GM12878 (cell line): ENCODE measurements at regions of chr12 and their contacts with region 1.

Region 1: DNA sequence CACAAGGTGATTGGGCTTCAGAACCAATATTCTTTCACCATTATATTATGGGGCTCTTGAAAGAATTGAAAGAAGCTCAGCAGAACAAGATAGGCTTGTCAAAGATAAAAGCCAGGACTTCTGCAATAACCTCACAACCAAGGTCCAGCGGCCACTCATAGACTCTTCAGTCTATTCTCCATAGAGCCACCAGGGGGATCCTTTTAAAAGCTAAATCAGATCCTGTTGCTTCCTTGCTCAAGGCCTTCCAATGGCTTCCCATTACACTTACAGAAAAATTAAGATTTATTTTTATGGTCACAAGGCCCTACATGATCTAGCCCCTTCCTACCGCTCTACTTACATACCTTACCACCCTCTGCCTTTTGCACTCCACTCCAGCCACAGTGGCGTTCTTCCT is 169.6 kb downstream of the C12orf42 start:
- DNase-seq: no peak
- ATAC-seq: peak; percentile 65
- H3K4me3 ChIP-seq: no peak overlapping the region
- H3K27ac ChIP-seq: no peak overlapping the region
- H3K4me1 ChIP-seq: no peaks in the 10 kb centered on the region
- H3K27me3 ChIP-seq: no peaks in the 10 kb centered on the region
- CTCF ChIP-seq: peak; percentile 26 to 42 (median 31); a peak in 4 of 6 replicates
- EP300 ChIP-seq: no peak
- POLR2A ChIP-seq: no peak
- RAD21 ChIP-seq: peak; percentile 70

Region 2: DNA sequence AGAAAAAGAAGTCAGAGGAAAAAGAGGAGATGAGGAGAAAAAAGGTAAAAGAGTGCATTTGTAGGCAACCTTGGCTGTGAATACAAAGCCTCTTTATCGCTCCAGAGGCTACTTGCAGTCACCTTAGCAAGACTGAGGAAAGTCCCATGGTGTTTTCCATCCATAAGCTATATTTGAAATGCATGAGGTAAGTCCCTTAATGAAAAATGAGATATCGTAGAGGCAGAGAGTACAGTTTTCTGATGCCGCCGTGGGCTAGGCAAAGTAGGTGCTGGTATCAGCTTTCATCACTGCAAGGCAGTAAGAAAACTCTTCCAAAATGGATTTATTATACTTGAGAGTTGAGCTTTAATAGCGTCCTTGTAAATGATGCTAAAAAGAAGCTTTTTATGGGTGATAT is 181.9 kb before region 1 on chr12:
- CTCF ChIA-PET with region 1: no interaction called
- POLR2A ChIA-PET with region 1: no interaction called
- RAD21 ChIA-PET with region 1: no interaction called
- SMC1A ChIA-PET with region 1: no interaction called
- in situ Hi-C with region 1: no loop called
- intact Hi-C with region 1: no loop called
- DNase-seq: peak; percentile 48
- ATAC-seq: peak; percentile 94
- H3K4me3 ChIP-seq: no peak overlapping the region
- H3K27ac ChIP-seq: peak overlapping the region; percentile 17; the same call in 1 of the 2 replicates
- H3K4me1 ChIP-seq: no peaks in the 10 kb centered on the region
- H3K27me3 ChIP-seq: no peaks in the 10 kb centered on the region
- CTCF ChIP-seq: no peak
- EP300 ChIP-seq: peak in 1 of 2 experiments; percentile 23; a peak in 1 of 4 replicates
- POLR2A ChIP-seq: no peak
- RAD21 ChIP-seq: no peak

Region 3: GRCh38 chr12:103175617-103176016 is 150.6 kb before region 1 on chr12:
- CTCF ChIA-PET with region 1: no interaction called
- POLR2A ChIA-PET with region 1: no interaction called
- RAD21 ChIA-PET with region 1: no interaction called
- SMC1A ChIA-PET with region 1: no interaction called
- in situ Hi-C with region 1: no loop called
- intact Hi-C with region 1: no loop called
- DNase-seq: no peak
- ATAC-seq: no peak
- H3K4me3 ChIP-seq: no peak overlapping the region
- H3K27ac ChIP-seq: no peak overlapping the region
- H3K4me1 ChIP-seq: no peaks in the 10 kb centered on the region
- H3K27me3 ChIP-seq: no peaks in the 10 kb centered on the region
- CTCF ChIP-seq: no peak
- EP300 ChIP-seq: no peak
- POLR2A ChIP-seq: no peak
- RAD21 ChIP-seq: no peak

Region 4: GRCh38 chr12:103336940-103337339 is 10.8 kb after region 1 on chr12:
- CTCF ChIA-PET with region 1: interaction called, 13 read pairs
- POLR2A ChIA-PET with region 1: no interaction called
- RAD21 ChIA-PET with region 1: interaction called, 3 read pairs
- SMC1A ChIA-PET with region 1: interaction called, 6 read pairs
- in situ Hi-C with region 1: no loop called
- intact Hi-C with region 1: no loop called
- DNase-seq: no peak
- ATAC-seq: no peak
- H3K4me3 ChIP-seq: no peak overlapping the region
- H3K27ac ChIP-seq: no peak overlapping the region
- H3K4me1 ChIP-seq: no peaks in the 10 kb centered on the region
- H3K27me3 ChIP-seq: no peaks in the 10 kb centered on the region
- CTCF ChIP-seq: no peak
- EP300 ChIP-seq: no peak
- POLR2A ChIP-seq: no peak
- RAD21 ChIP-seq: no peak